Right ventricle myocardium inferior (tissue), 1 donor: ENCODE measurements at regions of chr11 and their contacts with region 1.

Region 1: DNA sequence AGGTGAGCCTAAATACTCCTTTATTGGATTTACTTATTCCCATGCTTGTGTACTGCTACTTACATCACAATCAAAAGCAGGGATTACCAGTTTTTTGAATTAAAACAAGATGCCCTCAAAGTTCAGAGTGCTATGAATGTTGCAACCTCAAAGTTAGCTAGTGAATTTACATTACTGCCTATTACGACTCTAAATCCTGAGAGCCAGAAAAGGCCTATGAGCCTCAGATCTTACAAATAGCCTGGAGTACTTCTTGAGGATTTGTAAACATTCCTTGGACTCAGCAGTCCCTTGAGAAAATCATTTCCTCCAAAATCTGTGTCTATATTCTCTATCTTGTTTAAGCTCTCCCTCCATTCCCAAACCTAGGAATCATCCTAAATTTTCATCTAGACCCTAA is 25.5 kb downstream of the CHORDC1 start:
- DNase-seq: no peak
- ATAC-seq: no peak

Region 2: DNA sequence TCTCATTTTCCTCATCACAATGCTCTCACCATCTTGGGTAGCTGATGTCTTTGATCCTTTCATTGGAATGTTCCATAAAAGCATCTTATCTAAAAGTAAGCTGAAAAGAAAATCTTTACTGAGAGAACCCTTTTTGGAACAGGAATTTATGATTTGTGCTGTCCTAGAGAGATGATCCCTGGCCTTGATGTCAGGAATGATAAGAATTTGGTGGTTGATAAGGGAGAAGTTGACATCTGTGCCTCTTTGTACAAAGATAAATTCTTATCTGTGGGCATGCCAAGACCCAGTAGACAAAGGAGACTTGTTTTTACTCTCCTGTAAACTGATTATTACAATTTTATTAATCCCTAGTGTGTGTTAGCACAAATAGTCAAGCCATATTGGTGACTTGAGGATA is 26.0 kb before region 1 on chr11:
- intact Hi-C with region 1: loop called (anchors 1 kb)
- DNase-seq: no peak
- ATAC-seq: no peak